ENCODE measurements at regions of chr5 and their contacts with region 1.

Region 1: DNA sequence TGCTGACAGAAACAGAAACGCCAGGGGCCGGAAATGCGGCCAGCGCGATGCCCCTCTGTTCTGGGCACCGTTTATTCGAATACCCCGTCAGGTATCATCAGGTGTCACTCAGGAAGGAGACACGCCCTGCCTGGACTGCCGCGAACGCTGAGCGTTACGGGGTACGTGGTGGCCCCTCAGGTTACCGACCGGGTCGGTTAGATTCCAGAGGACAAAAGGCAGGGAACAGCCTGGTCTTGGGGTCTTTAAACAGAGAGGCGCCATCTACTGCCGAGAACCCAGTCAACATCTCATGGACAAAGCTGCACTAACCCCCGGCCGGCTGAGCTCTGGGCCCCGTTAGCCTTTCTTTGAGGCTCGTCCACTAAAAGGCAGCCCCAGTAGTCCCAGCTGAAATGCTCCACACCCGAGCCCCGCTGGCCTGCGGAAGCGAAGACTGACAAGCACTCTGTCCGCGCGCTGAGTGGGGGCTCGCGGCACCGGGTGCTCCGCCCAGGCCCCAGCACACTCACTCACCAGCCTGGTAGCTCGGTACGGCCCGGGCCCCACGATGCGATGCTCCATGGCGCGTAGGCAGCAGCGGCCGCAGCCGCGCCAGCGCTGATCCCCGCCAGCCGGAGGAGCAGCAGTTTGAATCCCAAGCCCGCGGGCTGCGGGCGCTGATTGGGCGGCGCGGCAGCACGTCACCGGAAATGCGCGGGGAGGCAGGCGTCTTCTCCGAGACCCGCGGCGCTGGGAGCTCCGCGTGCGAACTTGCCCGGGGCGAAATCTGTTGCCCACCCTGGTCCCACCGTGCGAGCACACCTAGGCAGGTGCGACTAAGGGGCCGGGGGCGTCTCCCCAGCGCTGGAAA is at the start of gene DEPDC1B:
- DNase-seq: peak; percentile 90
- H3K4me3 Mint-ChIP-seq: peak within 1 kb of the TSS; percentile 90
- H3K27ac Mint-ChIP-seq: peak within 1 kb of the TSS; percentile 85
- H3K4me1 Mint-ChIP-seq: peaks cover 32% of the 10 kb centered on the region
- H3K27me3 Mint-ChIP-seq: peaks cover 7% of the 10 kb centered on the region
- total RNA-seq, gene DEPDC1B: 39.0 to 42.3 TPM

Region 2: GRCh38 chr5:60668686-60669304 is 31.0 kb before region 1 on chr5:
- CTCF ChIA-PET with region 1: interaction called, 11 read pairs
- POLR2A ChIA-PET with region 1: no interaction called
- DNase-seq: no peak
- H3K4me3 Mint-ChIP-seq: no peak overlapping the region
- H3K27ac Mint-ChIP-seq: no peak overlapping the region
- H3K4me1 Mint-ChIP-seq: no peaks in the 10 kb centered on the region
- H3K27me3 Mint-ChIP-seq: no peaks in the 10 kb centered on the region

Region 3: GRCh38 chr5:60677844-60678664 is 21.7 kb before region 1 on chr5:
- CTCF ChIA-PET with region 1: interaction called, 11 read pairs
- POLR2A ChIA-PET with region 1: interaction called, 3 read pairs
- DNase-seq: no peak
- H3K4me3 Mint-ChIP-seq: no peak overlapping the region
- H3K27ac Mint-ChIP-seq: no peak overlapping the region
- H3K4me1 Mint-ChIP-seq: peaks cover 6% of the 10 kb centered on the region
- H3K27me3 Mint-ChIP-seq: no peaks in the 10 kb centered on the region

Region 4: DNA sequence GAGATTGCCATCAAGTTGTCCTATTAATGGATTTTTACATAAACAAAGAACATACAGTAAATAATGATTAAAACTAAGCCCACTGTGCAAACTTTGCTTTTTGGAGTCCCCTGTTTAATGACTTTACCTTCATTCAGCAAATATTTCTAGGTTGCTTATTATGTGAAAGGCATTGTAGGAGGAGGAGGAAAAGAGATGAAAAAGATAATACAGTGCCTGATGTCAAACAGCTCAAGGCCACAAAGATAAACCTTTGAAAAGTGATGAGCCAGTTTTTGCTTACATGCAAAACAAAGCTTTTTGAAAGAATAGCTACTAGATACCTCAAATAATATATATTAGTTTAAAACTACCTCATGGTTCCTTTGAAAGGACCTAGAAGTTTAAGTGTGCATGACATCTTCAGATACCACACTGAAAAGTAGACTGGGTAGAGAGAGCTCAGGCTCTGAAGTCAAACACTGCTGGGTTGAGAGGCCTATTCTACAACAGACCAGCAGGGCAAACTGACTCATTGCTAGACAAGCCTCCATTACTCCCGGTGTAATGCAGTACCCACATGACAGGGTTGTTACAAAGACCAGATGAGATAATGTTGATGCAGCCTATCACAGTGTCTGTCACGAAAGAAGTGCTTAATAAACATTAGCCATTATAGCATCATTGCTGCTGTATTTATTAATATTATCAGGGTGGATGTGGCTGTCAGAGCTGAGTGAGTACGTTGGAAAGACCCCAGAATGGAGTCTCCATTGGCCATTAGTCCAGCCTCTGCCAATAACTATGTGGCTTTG is 11.6 kb before region 1 on chr5:
- CTCF ChIA-PET with region 1: interaction called, 31 read pairs
- POLR2A ChIA-PET with region 1: interaction called, 23 read pairs
- DNase-seq: no peak
- H3K4me3 Mint-ChIP-seq: no peak overlapping the region
- H3K27ac Mint-ChIP-seq: no peak overlapping the region
- H3K4me1 Mint-ChIP-seq: peaks cover 1% of the 10 kb centered on the region
- H3K27me3 Mint-ChIP-seq: no peaks in the 10 kb centered on the region

Region 5: GRCh38 chr5:60944904-60945812 is 245.4 kb after region 1 on chr5 and contains the starts of genes ERCC8 and NDUFAF2:
- CTCF ChIA-PET with region 1: no interaction called
- POLR2A ChIA-PET with region 1: interaction called, 24 read pairs
- DNase-seq: peak; percentile 91
- H3K4me3 Mint-ChIP-seq: no peak within 1 kb of the TSS
- H3K27ac Mint-ChIP-seq: no peak within 1 kb of the TSS
- H3K4me1 Mint-ChIP-seq: peaks cover 17% of the 10 kb centered on the region
- H3K27me3 Mint-ChIP-seq: no peaks in the 10 kb centered on the region
- total RNA-seq, gene ERCC8: 5.9 to 7.3 TPM
- total RNA-seq, gene NDUFAF2: 18.3 to 21.1 TPM

Measured in activated CD4-positive, alpha-beta memory T cell treated with anti-CD3 and anti-CD28 coated beads, Interleukin-2, amount 10 ng/mL, durations not matched to agents 7 days and 5 days (primary cell).